IMR-90 (cell line): ENCODE measurements at regions of chr4 and their contacts with region 1.

Region 1: GRCh38 chr4:188316391-188316790 is 177.2 kb downstream of the TRIML1 start:
- DNase-seq: no peak
- ATAC-seq: no peak
- H3K4me3 ChIP-seq: no peak overlapping the region
- H3K27ac ChIP-seq: no peak overlapping the region
- H3K4me1 ChIP-seq: no peaks in the 10 kb centered on the region
- H3K27me3 ChIP-seq: no peaks in the 10 kb centered on the region
- CTCF ChIP-seq: no peak
- POLR2A ChIP-seq: no peak
- RAD21 ChIP-seq: no peak

Region 2: DNA sequence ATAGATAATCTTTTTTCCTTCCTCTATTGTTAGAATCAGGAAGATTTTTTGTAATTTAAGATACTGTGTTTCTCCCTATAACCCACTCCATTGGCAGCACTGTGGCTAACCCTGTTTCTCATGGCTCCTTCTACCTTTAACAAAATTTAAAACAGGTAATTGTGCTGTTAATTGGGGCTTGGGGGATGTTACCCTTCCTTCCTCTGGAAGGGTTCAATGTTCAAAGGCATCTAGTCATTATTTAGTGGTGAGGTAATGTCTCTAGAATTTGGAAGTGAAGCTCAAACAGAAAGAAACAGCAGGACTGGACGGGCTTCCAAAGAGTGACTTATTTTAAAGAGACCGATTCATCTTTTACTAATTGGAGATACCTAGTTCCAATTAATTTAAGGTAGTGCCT is 10.7 kb before region 1 on chr4:
- CTCF ChIA-PET with region 1: no interaction called
- POLR2A ChIA-PET with region 1: interaction called, 13 read pairs
- dilution Hi-C with region 1: no loop called
- in situ Hi-C with region 1: no loop called
- intact Hi-C with region 1: no loop called
- DNase-seq: no peak
- ATAC-seq: no peak
- H3K4me3 ChIP-seq: no peak overlapping the region
- H3K27ac ChIP-seq: no peak overlapping the region
- H3K4me1 ChIP-seq: no peaks in the 10 kb centered on the region
- H3K27me3 ChIP-seq: no peaks in the 10 kb centered on the region
- CTCF ChIP-seq: no peak
- POLR2A ChIP-seq: no peak
- RAD21 ChIP-seq: no peak